Activated T-helper 2 cell treated with anti-CD3 and anti-CD28 coated beads, Interferon-gamma antibody, Interleukin-2, Interleukin-4, amounts not matched to agents 10 μg/mL and 5 μg/mL and 100 μg/mL, durations not matched to agents 14 hours and 24 hours and 36 hours (primary cell): ENCODE measurements at regions of chr6 and their contacts with region 1.

Region 1: DNA sequence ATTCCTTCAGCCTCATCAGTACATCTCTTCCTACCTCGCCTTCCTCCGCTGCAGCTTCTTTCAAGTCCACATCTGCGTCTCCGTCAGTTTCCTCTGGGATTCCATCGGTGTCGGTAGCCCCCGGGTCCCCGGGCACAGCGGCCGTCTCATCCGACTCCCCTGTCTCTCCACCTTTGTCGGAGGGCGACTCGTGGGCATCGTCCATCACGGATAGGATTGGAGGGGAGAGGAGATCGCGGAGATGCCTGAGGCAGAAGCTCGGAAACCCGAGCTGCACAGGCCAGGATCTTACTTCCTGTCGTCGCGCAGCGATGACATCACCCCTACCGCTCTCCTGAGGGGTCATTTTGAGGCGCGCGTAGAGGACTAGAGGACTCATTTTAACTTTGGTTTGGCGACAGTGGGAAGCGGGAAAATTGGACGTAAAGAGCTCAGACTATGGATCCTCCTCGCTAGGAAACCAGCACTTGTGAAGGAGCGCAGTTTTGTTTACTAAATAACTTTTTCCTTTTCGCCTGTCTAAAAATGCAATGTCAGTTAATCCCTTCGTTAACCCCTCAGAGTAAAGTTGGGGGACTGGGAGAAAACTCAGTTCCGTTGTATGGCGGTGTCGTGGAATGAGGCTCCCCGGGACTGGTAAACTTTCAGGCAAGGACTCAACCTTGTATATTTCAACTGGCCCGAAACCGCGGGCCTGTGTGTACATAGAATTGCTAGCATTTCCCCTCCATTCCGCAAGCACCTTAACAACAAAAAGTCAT is at the start of gene TAF11:
- DNase-seq: peak; percentile 86
- H3K4me3 Mint-ChIP-seq: peak within 1 kb of the TSS; percentile 97
- H3K27ac Mint-ChIP-seq: peak within 1 kb of the TSS; percentile 96
- H3K4me1 Mint-ChIP-seq: peaks cover 24% of the 10 kb centered on the region
- H3K27me3 Mint-ChIP-seq: peaks cover 11% of the 10 kb centered on the region
- total RNA-seq, gene TAF11: 31.6 and 34.0 TPM in 2 replicates

Region 2: DNA sequence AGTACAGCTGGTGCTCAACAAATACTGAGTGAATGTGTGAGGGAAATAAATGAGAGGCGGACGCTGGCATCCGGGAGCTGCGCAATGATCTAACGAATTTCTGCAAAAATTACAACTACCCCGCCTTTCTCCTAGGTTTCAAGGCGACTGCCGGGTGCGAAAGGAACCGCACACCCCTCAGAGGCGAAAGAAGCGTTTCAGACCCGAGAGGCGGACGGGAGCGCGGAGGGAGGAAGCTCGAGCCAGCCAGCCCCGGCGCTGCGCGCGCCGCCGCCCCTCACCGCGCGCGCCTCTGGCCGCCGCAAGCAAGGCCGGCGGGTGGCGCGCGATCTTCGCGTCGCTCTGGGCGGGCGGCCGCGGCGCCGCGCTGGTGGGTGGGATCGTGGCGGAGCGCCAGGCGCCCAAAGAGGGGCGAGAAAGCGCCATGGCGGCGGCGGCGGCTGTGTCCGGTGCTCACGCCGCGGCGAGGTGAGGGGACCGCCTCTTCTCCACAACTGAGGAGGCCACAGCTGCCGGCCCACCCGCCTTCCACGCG is 96.2 kb before region 1 on chr6 and contains the start of gene BLTP3A:
- intact Hi-C with region 1: loop called (anchors 10 kb)
- DNase-seq: peak; percentile 77
- H3K4me3 Mint-ChIP-seq: peak within 1 kb of the TSS; percentile 94
- H3K27ac Mint-ChIP-seq: peak within 1 kb of the TSS; percentile 92
- H3K4me1 Mint-ChIP-seq: peaks cover 21% of the 10 kb centered on the region
- H3K27me3 Mint-ChIP-seq: peaks cover 5% of the 10 kb centered on the region
- total RNA-seq, gene BLTP3A: 15.1 and 16.3 TPM in 2 replicates

Region 3: GRCh38 chr6:34953061-34954025 is 65.4 kb after region 1 on chr6:
- intact Hi-C with region 1: no loop called
- DNase-seq: no peak
- H3K4me3 Mint-ChIP-seq: no peak overlapping the region
- H3K27ac Mint-ChIP-seq: no peak overlapping the region
- H3K4me1 Mint-ChIP-seq: peaks cover 8% of the 10 kb centered on the region
- H3K27me3 Mint-ChIP-seq: peaks cover 4% of the 10 kb centered on the region